CD4-positive, alpha-beta T cell (primary cell): ENCODE measurements at regions of chr3 and their contacts with region 1.

Region 1: GRCh38 chr3:137946345-137946973 is 63.5 kb upstream of the CLDN18 start:
- DNase-seq: peak; percentile 4 to 70 (median 22)
- ATAC-seq: peak; percentile 49
- H3K4me3 ChIP-seq: no peak overlapping the region
- H3K4me3 Mint-ChIP-seq: no peak overlapping the region
- H3K27ac ChIP-seq: no peak overlapping the region
- H3K27ac Mint-ChIP-seq: no peak overlapping the region
- H3K4me1 ChIP-seq: peaks cover 3% of the 10 kb centered on the region
- H3K4me1 Mint-ChIP-seq: no peaks in the 10 kb centered on the region
- H3K27me3 ChIP-seq: no peaks in the 10 kb centered on the region
- H3K27me3 Mint-ChIP-seq: no peaks in the 10 kb centered on the region
- CTCF ChIP-seq: peak; percentile 75

Region 2: DNA sequence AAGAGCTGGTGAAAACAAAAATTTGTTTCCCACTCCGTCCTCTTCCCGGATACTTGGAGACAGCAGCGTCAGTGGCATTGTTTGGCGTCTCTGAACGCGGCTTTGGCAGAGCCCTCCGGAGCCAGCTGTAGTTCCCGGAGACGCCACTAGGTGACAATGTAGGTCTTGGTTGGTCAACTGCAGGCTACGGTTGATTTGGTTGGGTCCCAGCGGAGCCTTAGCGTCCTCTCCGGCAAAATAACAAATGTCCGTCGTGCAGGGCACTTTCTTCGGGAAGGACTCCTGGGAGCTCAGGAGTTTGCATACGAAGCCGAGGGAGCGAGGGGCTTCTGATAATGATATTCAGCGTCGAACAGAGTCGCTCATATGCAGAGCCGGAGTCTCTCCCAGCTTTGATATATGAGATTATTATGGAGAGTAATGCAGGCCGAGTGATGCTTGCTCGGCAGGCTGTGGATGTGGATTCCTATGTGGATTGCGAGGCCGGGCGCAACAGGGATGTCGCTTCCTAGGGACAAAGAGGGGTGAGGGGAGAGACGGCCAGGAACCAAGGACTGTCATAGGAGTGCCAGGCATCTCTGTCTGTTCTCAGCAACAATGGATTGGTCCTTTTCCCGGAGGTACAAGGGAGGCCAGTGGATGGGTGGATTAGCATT is 913.9 kb before region 1 on chr3:
- CTCF ChIA-PET with region 1: no interaction called
- POLR2A ChIA-PET with region 1: no interaction called
- intact Hi-C with region 1: loop called (anchors 5 to 10 kb)
- DNase-seq: peak; percentile 52 to 85 (median 66)
- ATAC-seq: peak; percentile 81
- H3K4me3 ChIP-seq: peak overlapping the region; percentile 28
- H3K4me3 Mint-ChIP-seq: peak overlapping the region; percentile 71
- H3K27ac ChIP-seq: no peak overlapping the region
- H3K27ac Mint-ChIP-seq: no peak overlapping the region
- H3K4me1 ChIP-seq: peaks cover 8% of the 10 kb centered on the region
- H3K4me1 Mint-ChIP-seq: peaks cover 9% of the 10 kb centered on the region
- H3K27me3 ChIP-seq: peaks cover 5 to 20% of the 10 kb centered on the region in 2 experiments
- H3K27me3 Mint-ChIP-seq: peaks cover 38% of the 10 kb centered on the region
- CTCF ChIP-seq: peak; percentile 99

Region 3: GRCh38 chr3:137105277-137105977 is 841.0 kb before region 1 on chr3:
- CTCF ChIA-PET with region 1: no interaction called
- POLR2A ChIA-PET with region 1: no interaction called
- intact Hi-C with region 1: loop called (anchors 1 to 2 kb)
- DNase-seq: peak in 4 of 14 experiments; percentile 2 to 61 (median 48)
- ATAC-seq: no peak
- H3K4me3 ChIP-seq: no peak overlapping the region
- H3K4me3 Mint-ChIP-seq: no peak overlapping the region
- H3K27ac ChIP-seq: no peak overlapping the region
- H3K27ac Mint-ChIP-seq: no peak overlapping the region
- H3K4me1 ChIP-seq: no peaks in the 10 kb centered on the region
- H3K4me1 Mint-ChIP-seq: no peaks in the 10 kb centered on the region
- H3K27me3 ChIP-seq: peaks cover 3 to 10% of the 10 kb centered on the region in 2 experiments
- H3K27me3 Mint-ChIP-seq: peaks cover 29% of the 10 kb centered on the region
- CTCF ChIP-seq: peak; percentile 62

Region 4: GRCh38 chr3:137121704-137122314 is 824.6 kb before region 1 on chr3:
- CTCF ChIA-PET with region 1: no interaction called
- POLR2A ChIA-PET with region 1: no interaction called
- intact Hi-C with region 1: loop called in 1 of 2 experiments (anchors 5 kb)
- DNase-seq: peak in 2 of 14 experiments; percentile 23 to 27
- ATAC-seq: no peak
- H3K4me3 ChIP-seq: no peak overlapping the region
- H3K4me3 Mint-ChIP-seq: no peak overlapping the region
- H3K27ac ChIP-seq: no peak overlapping the region
- H3K27ac Mint-ChIP-seq: no peak overlapping the region
- H3K4me1 ChIP-seq: no peaks in the 10 kb centered on the region
- H3K4me1 Mint-ChIP-seq: no peaks in the 10 kb centered on the region
- H3K27me3 ChIP-seq: no peaks in the 10 kb centered on the region
- H3K27me3 Mint-ChIP-seq: peaks cover 35% of the 10 kb centered on the region
- CTCF ChIP-seq: peak; percentile 29

Region 5: GRCh38 chr3:138408751-138409161 is 462.3 kb after region 1 on chr3:
- CTCF ChIA-PET with region 1: no interaction called
- POLR2A ChIA-PET with region 1: no interaction called
- intact Hi-C with region 1: no loop called
- DNase-seq: no peak
- ATAC-seq: no peak
- H3K4me3 ChIP-seq: no peak overlapping the region
- H3K4me3 Mint-ChIP-seq: no peak overlapping the region
- H3K27ac ChIP-seq: no peak overlapping the region
- H3K27ac Mint-ChIP-seq: no peak overlapping the region
- H3K4me1 ChIP-seq: no peaks in the 10 kb centered on the region
- H3K4me1 Mint-ChIP-seq: no peaks in the 10 kb centered on the region
- H3K27me3 ChIP-seq: no peaks in the 10 kb centered on the region
- H3K27me3 Mint-ChIP-seq: peaks cover 8% of the 10 kb centered on the region
- CTCF ChIP-seq: no peak